Upper lobe of right lung (tissue), 1 donor: ENCODE measurements at regions of chr3 and their contacts with region 1.

Region 1: DNA sequence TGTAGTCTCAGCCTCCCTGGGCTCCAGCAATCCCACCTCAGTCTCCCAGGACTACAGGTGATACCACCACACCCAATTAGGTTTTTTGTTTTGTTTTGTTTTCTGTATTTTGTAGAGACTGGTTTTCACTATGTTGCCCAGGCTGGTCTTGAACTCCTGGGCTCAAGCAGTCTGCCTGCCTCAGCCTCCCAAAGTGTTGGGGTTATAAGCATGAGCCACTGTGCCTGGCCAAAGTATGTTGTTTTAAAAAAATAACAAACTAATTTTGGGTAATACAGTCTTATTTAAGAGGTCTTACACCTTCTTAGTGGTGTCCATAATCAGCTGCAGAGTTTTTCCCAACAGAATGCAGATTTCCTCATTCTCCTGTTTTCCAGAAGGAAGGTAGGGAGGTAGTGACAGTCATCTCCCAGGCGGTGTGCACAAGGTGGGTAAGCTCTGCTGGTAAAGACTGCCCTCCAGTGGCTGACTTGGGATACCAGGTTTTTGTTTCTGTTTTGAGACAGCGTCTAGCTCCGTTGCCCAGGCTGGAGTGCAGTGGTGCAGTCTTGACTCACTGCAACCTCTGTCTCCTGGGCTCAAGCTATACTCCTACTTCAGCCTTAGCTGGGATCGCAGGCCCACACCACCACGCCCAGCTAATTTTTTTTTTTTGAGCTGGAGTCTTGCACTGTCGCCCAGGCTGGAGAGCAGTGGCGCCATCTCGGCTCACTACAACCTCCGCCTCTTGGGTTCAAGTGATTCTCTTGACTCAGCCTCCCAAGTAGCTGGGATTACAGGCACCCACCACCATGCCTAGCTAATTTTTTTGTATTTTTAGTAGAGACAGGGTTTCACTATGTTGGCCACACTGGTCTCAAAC is 58.4 kb downstream of the MAP6D1 start:
- DNase-seq: peak; percentile 80
- ATAC-seq: peak; percentile 93
- H3K4me3 ChIP-seq: no peak overlapping the region
- H3K27ac ChIP-seq: peak overlapping the region; percentile 61
- H3K4me1 ChIP-seq: peaks cover 28% of the 10 kb centered on the region
- H3K27me3 ChIP-seq: no peaks in the 10 kb centered on the region
- CTCF ChIP-seq: peak; percentile 80

Region 2: DNA sequence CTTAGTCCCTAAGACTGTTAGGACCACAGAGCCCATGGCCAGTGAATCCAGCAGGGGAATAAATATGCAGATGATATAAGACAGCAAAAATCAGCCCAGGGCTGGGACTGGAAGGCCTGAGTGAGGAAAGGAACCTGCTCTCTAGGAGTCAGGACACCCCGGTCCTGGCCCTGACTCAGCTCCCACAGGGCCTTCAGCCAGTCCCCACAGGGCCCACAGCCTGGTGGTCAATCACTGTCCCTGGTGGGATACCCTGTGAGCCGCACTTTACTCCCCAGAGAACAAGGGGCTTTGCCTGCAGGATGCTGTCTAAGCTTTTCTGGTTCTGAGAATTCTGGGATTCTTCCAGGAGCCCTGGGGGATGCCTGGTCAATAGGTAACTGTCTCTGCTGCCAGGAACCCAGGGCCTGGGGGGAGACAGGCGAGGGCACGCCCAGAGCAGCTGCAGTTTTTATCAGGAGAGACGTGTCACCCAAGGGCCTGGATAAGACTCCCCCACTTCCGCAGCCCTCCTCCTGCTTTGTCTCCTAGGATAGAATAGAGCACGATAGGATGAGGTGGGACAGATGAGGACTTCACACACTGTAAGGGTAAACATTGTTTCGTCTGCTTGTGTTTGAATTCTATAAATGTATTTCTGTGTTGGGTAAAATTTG is 289.0 kb before region 1 on chr3:
- intact Hi-C with region 1: loop called (anchors 10 kb)
- DNase-seq: no peak
- ATAC-seq: no peak
- H3K4me3 ChIP-seq: no peak overlapping the region
- H3K27ac ChIP-seq: no peak overlapping the region
- H3K4me1 ChIP-seq: no peaks in the 10 kb centered on the region
- H3K27me3 ChIP-seq: no peaks in the 10 kb centered on the region
- CTCF ChIP-seq: no peak

Region 3: GRCh38 chr3:183680061-183680460 is 86.9 kb before region 1 on chr3:
- intact Hi-C with region 1: no loop called
- DNase-seq: no peak
- ATAC-seq: no peak
- H3K4me3 ChIP-seq: no peak overlapping the region
- H3K27ac ChIP-seq: no peak overlapping the region
- H3K4me1 ChIP-seq: no peaks in the 10 kb centered on the region
- H3K27me3 ChIP-seq: no peaks in the 10 kb centered on the region
- CTCF ChIP-seq: no peak